MCF 10A (cell line): ENCODE measurements at regions of chr14 and their contacts with region 1.

Region 1: DNA sequence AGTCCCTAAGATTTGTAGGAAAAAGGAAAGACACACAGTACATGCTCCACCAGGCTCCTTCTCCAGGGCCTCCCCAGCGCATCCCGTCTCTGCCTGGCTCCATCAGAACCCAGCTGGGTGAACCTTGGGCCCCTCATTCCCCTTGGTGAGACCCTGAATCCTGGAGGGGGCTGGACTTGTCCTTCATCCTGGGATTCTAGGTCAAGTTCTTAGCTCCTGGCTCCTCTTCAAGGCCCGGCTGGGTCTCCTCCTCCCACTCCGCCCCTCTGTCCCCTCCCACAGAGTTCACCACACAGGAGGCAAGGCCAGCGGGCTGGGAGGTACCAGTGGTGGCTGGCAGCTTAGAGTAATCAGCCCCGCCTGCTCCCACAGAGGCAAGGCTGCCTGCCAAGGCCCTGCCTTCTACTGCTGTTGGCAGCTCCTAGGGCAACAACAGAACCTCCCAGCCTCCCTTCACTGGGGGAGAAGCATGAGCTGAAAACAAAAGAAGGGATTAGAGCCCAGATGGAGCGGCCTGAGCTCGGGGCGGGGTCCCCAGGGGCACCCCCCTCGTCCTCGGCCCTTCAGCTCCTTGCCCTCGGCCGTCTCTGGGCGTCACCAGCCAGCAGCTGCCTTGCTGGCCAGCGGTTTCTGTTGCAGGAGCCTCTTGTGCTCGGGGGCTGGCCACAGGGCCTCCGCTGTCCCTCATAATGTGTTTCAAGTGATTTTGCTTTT is 49.4 kb downstream of the PSMA6 start:
- DNase-seq: peak; percentile 98
- H3K4me3 Mint-ChIP-seq: peak overlapping the region; percentile 59
- H3K27ac Mint-ChIP-seq: peak overlapping the region; percentile 88
- H3K4me1 Mint-ChIP-seq: peaks cover 29% of the 10 kb centered on the region
- H3K27me3 Mint-ChIP-seq: no peaks in the 10 kb centered on the region
- CTCF ChIP-seq: no peak

Region 2: DNA sequence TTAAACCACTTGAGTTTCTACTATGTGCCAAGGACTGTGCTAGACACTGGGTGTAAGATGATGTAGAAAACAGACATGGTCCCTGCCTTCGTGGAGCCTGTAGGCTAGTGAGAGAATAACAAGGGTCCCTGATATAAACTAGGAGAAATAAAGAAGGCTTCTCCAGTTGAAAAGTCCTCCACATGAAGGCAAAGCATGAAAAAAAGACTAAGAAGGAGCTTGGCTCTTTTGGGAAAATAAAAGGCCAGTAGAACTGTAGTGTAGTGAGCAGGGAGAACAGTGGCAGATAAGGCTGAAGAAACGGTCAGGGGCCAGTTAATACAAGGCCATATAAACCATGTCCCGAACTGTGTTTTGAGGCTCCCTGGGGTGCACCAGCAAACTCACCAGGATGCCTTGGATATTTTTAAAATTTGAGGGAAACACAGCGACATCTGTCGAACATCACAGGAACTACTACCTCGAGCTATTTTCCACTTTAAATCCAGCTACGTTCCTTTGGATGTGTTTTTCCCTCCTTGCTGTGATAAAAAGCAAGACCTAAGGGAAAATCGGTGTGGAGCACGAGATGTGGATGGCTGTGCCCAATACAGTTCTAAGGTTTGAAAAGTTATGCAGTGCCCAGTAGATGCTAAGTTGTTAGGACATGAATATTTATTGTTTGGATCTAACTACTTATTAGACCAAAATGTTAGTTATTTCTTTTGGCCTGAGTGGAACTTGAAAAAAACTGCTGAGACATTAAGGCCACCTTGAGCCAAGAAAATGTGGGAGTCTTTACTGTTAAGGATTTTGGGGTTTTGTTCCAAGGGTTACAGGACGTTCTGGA is 618.7 kb before region 1 on chr14:
- CTCF ChIA-PET with region 1: no interaction called
- POLR2A ChIA-PET with region 1: no interaction called
- intact Hi-C with region 1: no loop called
- DNase-seq: peak; percentile 63
- H3K4me3 Mint-ChIP-seq: no peak overlapping the region
- H3K27ac Mint-ChIP-seq: no peak overlapping the region
- H3K4me1 Mint-ChIP-seq: peaks cover 10% of the 10 kb centered on the region
- H3K27me3 Mint-ChIP-seq: no peaks in the 10 kb centered on the region
- CTCF ChIP-seq: peak; percentile 79

Region 3: GRCh38 chr14:35121887-35122695 is 219.5 kb before region 1 on chr14 and contains the starts of genes PPP2R3C and PRORP:
- CTCF ChIA-PET with region 1: no interaction called
- POLR2A ChIA-PET with region 1: interaction called, 21 read pairs
- intact Hi-C with region 1: no loop called
- DNase-seq: peak; percentile 99
- H3K4me3 Mint-ChIP-seq: peak within 1 kb of the TSS; percentile 98
- H3K27ac Mint-ChIP-seq: peak within 1 kb of the TSS; percentile 100
- H3K4me1 Mint-ChIP-seq: peaks cover 31% of the 10 kb centered on the region
- H3K27me3 Mint-ChIP-seq: no peaks in the 10 kb centered on the region
- CTCF ChIP-seq: no peak
- total RNA-seq, gene PPP2R3C: 16.9 and 21.6 TPM in 2 replicates
- total RNA-seq, gene PRORP: 27.9 and 30.5 TPM in 2 replicates

Region 4: DNA sequence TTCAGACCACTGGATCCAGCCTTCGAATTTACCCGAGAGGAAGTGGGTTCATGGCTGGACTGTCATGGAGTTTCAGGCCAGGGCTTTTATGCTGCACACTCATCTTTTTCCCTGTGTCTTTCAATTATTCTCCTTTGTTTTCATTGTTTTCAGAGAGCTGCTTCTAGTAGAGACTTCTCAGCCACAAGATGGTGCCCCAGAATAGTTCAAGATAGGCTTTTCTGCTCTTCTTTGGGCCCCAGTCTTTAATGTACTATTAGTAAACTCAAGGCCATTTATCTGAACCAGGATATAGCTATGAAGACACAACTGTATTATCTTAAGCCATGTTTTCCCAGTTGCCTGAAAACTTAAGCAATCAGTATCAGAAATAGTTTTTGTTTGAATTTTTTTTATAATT is 79.8 kb before region 1 on chr14:
- CTCF ChIA-PET with region 1: no interaction called
- POLR2A ChIA-PET with region 1: no interaction called
- intact Hi-C with region 1: no loop called
- DNase-seq: no peak
- H3K4me3 Mint-ChIP-seq: no peak overlapping the region
- H3K27ac Mint-ChIP-seq: no peak overlapping the region
- H3K4me1 Mint-ChIP-seq: peaks cover 9% of the 10 kb centered on the region
- H3K27me3 Mint-ChIP-seq: no peaks in the 10 kb centered on the region
- CTCF ChIP-seq: no peak

Region 5: GRCh38 chr14:35352266-35353233 is 10.9 kb after region 1 on chr14:
- CTCF ChIA-PET with region 1: interaction called, 4 read pairs
- POLR2A ChIA-PET with region 1: interaction called, 10 read pairs
- intact Hi-C with region 1: no loop called
- DNase-seq: no peak
- H3K4me3 Mint-ChIP-seq: no peak overlapping the region
- H3K27ac Mint-ChIP-seq: no peak overlapping the region
- H3K4me1 Mint-ChIP-seq: peaks cover 11% of the 10 kb centered on the region
- H3K27me3 Mint-ChIP-seq: no peaks in the 10 kb centered on the region
- CTCF ChIP-seq: no peak

Region 6: DNA sequence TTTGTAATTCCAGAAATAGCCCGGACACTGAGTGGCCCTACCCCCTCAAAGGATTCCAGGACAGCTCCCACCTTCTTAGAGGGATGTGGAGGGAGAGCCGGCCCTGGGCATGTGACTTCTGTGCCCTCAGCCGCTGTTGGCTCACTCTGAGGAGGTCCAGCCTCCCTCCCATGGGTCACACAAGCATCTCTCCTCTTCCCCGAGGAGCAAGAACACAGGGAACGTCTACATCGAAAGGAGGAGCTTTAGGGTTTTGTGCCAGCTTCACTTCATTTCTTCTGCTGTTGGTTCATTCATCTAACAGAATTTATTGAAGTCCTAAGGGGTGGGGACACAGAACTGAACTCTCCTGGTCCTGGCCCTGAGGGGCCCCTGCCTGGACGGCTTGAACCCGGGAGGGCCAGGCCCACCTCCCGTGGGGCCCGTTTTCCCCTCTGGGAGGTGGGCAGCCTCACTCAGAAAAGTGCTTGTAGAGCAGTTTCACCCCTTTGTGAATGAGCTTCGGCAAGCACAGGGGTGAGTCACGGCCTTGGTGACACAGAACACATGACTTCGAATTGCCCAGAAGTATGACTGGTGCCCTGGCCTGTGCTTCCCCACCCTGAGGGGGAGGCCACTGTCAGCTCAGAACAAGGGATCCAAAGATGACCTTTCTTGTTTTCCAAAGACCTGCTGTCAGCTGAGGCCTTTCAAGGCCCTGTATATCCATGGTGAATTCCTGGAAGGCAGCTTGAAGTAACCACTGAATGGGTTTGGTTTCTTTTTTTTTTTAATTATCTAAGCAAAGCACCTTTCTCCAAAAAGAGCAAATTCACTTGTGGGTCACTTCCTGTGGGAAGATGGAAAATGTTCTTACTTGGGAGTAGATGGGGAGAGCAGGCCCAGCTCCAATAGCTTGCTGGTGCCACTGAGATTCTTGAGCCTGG is 23.8 kb after region 1 on chr14:
- CTCF ChIA-PET with region 1: interaction called, 9 read pairs
- POLR2A ChIA-PET with region 1: interaction called, 42 read pairs
- intact Hi-C with region 1: no loop called
- DNase-seq: peak; percentile 82
- H3K4me3 Mint-ChIP-seq: no peak overlapping the region
- H3K27ac Mint-ChIP-seq: peak overlapping the region; percentile 81
- H3K4me1 Mint-ChIP-seq: peaks cover 5% of the 10 kb centered on the region
- H3K27me3 Mint-ChIP-seq: no peaks in the 10 kb centered on the region
- CTCF ChIP-seq: no peak

Region 7: GRCh38 chr14:35374273-35374681 is 32.7 kb after region 1 on chr14:
- CTCF ChIA-PET with region 1: interaction called, 9 read pairs
- POLR2A ChIA-PET with region 1: interaction called, 42 read pairs
- intact Hi-C with region 1: loop called (anchors 1 kb)
- DNase-seq: peak; percentile 99
- H3K4me3 Mint-ChIP-seq: peak overlapping the region; percentile 4
- H3K27ac Mint-ChIP-seq: peak overlapping the region; percentile 92
- H3K4me1 Mint-ChIP-seq: peaks cover 12% of the 10 kb centered on the region
- H3K27me3 Mint-ChIP-seq: no peaks in the 10 kb centered on the region
- CTCF ChIP-seq: no peak

Region 8: GRCh38 chr14:35398071-35398632 is 56.5 kb after region 1 on chr14:
- CTCF ChIA-PET with region 1: interaction called, 41 read pairs
- POLR2A ChIA-PET with region 1: interaction called, 422 read pairs
- intact Hi-C with region 1: no loop called
- DNase-seq: no peak
- H3K4me3 Mint-ChIP-seq: no peak overlapping the region
- H3K27ac Mint-ChIP-seq: peak overlapping the region; percentile 84
- H3K4me1 Mint-ChIP-seq: peaks cover 31% of the 10 kb centered on the region
- H3K27me3 Mint-ChIP-seq: no peaks in the 10 kb centered on the region
- CTCF ChIP-seq: no peak